H1 (cell line): ENCODE measurements at regions of chr7 and their contacts with region 1.

Region 1: DNA sequence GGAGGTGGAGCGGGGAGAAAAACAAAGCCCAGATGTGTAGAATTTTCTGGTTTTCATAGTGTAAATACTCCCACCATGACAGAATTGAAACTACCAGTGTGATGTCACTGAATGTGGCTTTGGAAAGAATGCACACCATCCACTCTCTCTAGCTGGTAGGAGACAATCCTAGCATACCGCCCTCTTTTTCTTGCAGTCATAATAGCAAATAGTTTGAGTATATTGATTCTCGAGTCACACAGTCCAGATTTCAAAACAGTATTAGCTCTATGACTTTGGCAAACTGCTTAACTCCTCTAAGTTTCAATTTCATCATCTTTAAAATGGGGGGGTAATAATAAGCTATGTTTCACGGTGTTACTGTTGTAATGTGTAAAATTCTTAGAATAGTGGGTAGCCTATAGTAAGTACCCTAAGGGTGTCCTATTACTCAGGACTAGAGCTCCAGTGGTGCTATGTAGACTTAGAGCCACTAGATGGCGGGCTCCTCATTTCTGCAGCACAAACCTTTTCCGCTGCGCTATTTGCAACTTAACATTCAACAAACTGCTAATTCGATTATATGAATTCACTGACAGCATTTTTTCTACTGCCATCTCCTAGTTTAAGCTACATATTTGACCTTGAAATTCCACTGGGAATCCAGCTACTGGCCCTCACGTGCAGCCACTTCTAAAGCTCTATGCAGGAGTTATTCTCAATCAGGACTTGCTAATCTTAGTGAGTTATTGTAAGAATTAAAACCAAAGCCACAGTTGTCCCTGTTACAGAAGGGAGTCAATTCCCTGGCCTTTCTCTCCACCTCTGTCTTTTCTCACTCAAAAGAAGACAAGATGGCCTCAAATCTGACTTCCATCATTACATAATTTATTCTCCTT is 18.7 kb downstream of the TAS2R40 start:
- DNase-seq: peak in 1 of 2 experiments; percentile 58
- H3K4me3 ChIP-seq: no peak overlapping the region
- H3K27ac ChIP-seq: no peak overlapping the region
- H3K4me1 ChIP-seq: no peaks in the 10 kb centered on the region
- H3K27me3 ChIP-seq: no peaks in the 10 kb centered on the region; a peak in 1 of 7 replicates
- CTCF ChIP-seq: peak; percentile 15 to 85 (median 83)
- EP300 ChIP-seq: no peak
- POLR2A ChIP-seq: no peak
- RAD21 ChIP-seq: peak; percentile 87 to 92

Region 2: GRCh38 chr7:143222782-143223181 is 17.7 kb before region 1 on chr7:
- CTCF ChIA-PET with region 1: interaction called, 37 read pairs
- POLR2A ChIA-PET with region 1: no interaction called
- DNase-seq: no peak
- H3K4me3 ChIP-seq: no peak overlapping the region
- H3K27ac ChIP-seq: no peak overlapping the region
- H3K4me1 ChIP-seq: no peaks in the 10 kb centered on the region
- H3K27me3 ChIP-seq: no peaks in the 10 kb centered on the region
- CTCF ChIP-seq: no peak
- EP300 ChIP-seq: no peak
- POLR2A ChIP-seq: no peak
- RAD21 ChIP-seq: no peak

Region 3: GRCh38 chr7:143256932-143257331 is 16.4 kb after region 1 on chr7:
- CTCF ChIA-PET with region 1: interaction called, 41 read pairs
- POLR2A ChIA-PET with region 1: no interaction called
- DNase-seq: no peak
- H3K4me3 ChIP-seq: no peak overlapping the region
- H3K27ac ChIP-seq: no peak overlapping the region
- H3K4me1 ChIP-seq: no peaks in the 10 kb centered on the region
- H3K27me3 ChIP-seq: no peaks in the 10 kb centered on the region
- CTCF ChIP-seq: no peak
- EP300 ChIP-seq: no peak
- POLR2A ChIP-seq: no peak
- RAD21 ChIP-seq: no peak

Region 4: DNA sequence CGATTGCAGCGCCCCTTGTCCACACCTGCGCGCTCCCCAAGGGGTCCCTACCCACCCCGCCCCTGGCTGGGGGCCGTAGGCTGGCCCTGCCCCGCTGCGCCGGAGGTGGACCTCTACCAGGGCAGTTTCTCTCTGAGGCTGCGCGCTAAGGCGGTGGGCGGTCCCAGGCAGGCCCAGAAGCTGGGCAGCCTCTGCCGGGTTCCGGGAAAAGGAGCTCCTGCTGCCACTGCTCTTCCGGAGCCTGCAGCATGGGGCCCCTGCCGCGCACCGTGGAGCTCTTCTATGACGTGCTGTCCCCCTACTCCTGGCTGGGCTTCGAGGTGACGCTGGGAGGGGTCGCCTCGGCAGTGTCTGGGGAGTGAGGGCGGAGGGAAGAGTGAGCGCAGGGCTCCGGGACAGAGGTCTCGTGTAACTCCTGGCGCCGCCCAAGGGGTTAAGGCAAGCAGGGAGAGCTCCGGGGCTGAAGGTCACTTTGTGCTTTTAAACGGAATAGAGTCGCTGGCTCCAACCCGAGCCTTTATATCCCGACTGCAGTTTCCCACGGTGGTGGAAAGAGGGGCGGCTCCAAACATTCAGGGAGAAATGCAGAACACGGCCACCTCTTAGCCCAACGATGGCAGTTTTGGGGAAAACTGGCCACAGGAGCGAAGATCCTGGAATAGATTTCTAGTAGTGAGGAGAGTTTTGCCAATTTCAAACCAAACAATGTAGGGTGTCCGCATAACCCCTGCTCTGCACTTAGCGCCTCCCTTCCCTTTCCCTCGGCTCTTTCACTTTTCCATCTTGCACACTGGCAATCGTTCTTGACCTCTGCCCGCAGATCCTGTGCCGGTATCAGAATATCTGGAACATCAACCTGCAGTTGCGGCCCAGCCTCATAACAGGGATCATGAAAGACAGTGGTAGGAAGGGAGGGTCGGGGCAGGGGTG is 23.0 kb after region 1 on chr7 and contains the start of gene GSTK1:
- CTCF ChIA-PET with region 1: interaction called, 35 read pairs
- POLR2A ChIA-PET with region 1: no interaction called
- DNase-seq: peak in 1 of 2 experiments; percentile 87
- H3K4me3 ChIP-seq: peak within 1 kb of the TSS; percentile 60 to 99 (median 80)
- H3K27ac ChIP-seq: no peak within 1 kb of the TSS
- H3K4me1 ChIP-seq: peaks cover 0 to 4% (median 0%) of the 10 kb centered on the region in 4 experiments; a peak in 2 of 7 replicates
- H3K27me3 ChIP-seq: peaks cover 0 to 3% (median 0%) of the 10 kb centered on the region in 4 experiments; a peak in 3 of 7 replicates
- CTCF ChIP-seq: no peak
- EP300 ChIP-seq: no peak
- POLR2A ChIP-seq: peak in 1 of 2 experiments; percentile 59; a peak in 2 of 3 replicates
- RAD21 ChIP-seq: no peak
- total RNA-seq, gene GSTK1: 25.5 and 26.2 TPM in 2 replicates

Region 5: DNA sequence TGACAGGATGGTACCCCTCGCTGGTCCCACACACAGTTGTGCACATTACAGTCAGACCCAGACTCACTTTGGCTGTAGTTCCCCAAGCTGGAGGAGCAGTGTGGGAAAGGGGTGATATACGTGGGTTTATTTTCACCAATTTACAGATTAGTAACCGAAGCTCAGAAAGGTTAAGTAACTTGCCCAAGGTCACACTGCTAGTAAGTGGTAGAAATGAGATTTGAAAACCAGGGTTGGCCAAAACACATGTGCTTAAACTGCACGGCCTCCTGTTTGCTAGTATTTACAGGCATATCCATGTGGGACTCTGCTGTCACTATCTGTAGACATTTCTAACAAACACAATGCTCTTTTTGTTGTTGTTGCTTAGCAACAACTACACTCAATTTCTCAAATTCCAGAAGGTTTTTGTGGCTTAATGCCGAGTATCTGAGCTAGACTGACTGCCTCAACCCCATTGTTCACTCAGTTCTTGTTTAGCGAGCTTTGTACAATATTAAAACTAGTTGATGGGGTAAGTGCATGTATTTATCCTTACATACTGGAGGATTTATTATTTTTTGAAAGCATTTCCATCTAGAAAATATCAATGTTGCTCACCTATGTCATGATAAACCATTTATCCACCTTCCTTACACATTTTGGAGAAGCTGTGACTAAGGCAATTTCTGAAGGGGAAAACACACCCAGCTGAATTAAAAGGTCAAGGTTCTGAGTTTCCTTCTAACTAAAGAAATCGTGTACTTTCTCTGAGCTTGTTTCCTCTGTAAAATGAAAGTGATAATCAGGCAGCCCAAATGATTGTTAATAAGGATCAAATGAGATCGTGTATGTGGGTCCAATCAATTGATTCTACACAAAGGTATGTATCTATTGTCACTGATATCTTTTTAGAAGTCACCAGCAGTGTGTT is 38.9 kb after region 1 on chr7:
- CTCF ChIA-PET with region 1: interaction called, 17 read pairs
- POLR2A ChIA-PET with region 1: no interaction called
- DNase-seq: no peak
- H3K4me3 ChIP-seq: no peak overlapping the region
- H3K27ac ChIP-seq: no peak overlapping the region
- H3K4me1 ChIP-seq: peaks cover 2 to 9% (median 4%) of the 10 kb centered on the region in 4 experiments; a peak in 5 of 7 replicates
- H3K27me3 ChIP-seq: no peaks in the 10 kb centered on the region
- CTCF ChIP-seq: no peak
- EP300 ChIP-seq: no peak
- POLR2A ChIP-seq: no peak
- RAD21 ChIP-seq: no peak